Gastrocnemius medialis (tissue), 4 donors: ENCODE measurements at regions of chr2 and their contacts with region 1.

Region 1: DNA sequence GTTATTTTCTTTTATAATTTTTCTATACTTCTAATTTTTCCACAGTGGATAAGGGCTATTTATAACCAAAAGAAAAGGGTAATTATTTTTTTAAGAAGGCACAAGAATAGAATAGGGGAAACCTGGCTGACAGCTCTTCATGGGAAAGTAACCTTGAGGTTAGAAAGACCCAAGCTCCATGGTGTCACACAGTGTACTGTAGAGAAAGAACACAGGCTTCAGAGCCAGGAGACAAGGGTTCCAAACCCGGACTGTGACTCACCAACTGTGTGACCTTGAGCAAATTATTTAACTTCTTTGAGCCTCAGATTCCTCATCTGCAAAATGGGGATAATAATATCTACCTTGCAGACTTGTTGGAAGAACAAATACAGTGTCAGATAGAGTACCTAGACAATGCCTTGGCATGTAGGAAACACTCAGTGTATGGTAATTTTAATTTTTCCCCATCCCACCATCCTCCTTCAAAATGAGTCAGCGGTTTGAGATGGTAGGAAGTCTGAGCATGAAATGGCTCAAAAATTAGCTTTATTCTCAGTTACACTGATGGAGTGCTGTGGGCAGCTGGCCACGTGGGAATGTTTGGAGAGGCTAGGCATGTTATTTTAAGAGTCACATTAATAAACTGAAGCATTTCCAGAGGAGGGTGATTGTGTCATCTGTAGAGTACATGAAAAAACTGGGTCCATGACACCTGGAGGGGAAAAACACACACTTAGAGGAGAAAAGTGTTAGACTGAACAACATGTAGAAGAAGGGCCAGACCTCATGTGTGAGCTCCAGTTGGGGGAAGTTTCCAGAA is 36.7 kb downstream of the TMEM37 start:
- DNase-seq: no peak
- ATAC-seq: peak in 1 of 2 donors; percentile 60
- H3K4me3 ChIP-seq: no peak overlapping the region
- H3K27ac ChIP-seq: no peak overlapping the region
- H3K4me1 ChIP-seq: peaks cover 7 to 11% of the 10 kb centered on the region in 2 donors
- H3K27me3 ChIP-seq: no peaks in the 10 kb centered on the region
- CTCF ChIP-seq: no peak
- POLR2A ChIP-seq: no peak

Region 2: GRCh38 chr2:117888897-117889296 is 1579.5 kb before region 1 on chr2:
- in situ Hi-C with region 1: no loop called
- intact Hi-C with region 1: no loop called
- DNase-seq: no peak
- ATAC-seq: no peak
- H3K4me3 ChIP-seq: no peak overlapping the region
- H3K27ac ChIP-seq: no peak overlapping the region
- H3K4me1 ChIP-seq: no peaks in the 10 kb centered on the region
- H3K27me3 ChIP-seq: no peaks in the 10 kb centered on the region
- CTCF ChIP-seq: no peak
- POLR2A ChIP-seq: no peak

Region 3: DNA sequence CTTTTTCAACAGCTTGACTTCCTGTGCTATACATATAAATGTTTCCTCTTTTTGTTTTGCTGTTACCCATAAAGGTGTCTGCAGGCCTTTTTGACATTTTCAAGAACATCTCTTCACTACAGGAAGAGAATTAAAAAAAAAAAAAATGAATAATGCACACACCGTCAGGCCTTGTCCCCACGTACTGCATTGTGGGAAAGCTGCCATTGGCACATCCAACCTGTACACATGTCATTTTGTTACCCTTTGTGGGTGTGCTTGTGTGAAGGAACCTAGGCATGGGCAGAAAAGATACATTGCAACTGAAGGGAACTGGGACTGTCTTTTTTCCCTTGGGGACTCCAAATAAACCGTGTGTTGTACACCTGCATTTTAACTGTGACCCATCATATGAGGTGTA is 53.5 kb before region 1 on chr2:
- in situ Hi-C with region 1: loop called in 2 of 4 experiments (anchors 5 kb)
- intact Hi-C with region 1: no loop called
- DNase-seq: no peak
- ATAC-seq: no peak
- H3K4me3 ChIP-seq: no peak overlapping the region
- H3K27ac ChIP-seq: no peak overlapping the region
- H3K4me1 ChIP-seq: no peaks in the 10 kb centered on the region
- H3K27me3 ChIP-seq: no peaks in the 10 kb centered on the region
- CTCF ChIP-seq: no peak
- POLR2A ChIP-seq: no peak

Region 4: DNA sequence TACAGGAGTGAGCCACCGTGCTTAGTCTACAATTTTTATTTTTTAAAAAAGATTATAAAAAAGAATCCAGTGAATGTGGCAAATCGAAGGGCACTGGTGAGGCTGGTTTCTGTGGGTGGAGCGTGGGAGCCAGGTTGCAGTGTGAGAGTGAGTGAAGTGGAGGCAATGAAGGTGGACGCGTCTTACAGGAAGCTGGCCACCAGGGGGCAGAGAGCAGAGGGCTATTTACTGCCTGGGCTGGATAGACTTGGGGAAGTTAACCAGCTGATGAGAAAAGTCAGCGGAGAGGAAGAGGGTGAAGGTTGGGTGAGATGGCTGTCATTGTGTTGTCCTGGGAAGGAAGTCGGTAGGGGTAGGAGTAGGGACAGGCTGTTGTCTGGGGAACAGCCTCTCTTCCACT is 49.1 kb after region 1 on chr2:
- in situ Hi-C with region 1: no loop called
- intact Hi-C with region 1: no loop called
- DNase-seq: peak in 1 of 2 donors; percentile 23
- ATAC-seq: no peak
- H3K4me3 ChIP-seq: no peak overlapping the region
- H3K27ac ChIP-seq: no peak overlapping the region
- H3K4me1 ChIP-seq: peaks cover 0 to 11% of the 10 kb centered on the region in 2 donors
- H3K27me3 ChIP-seq: peaks cover 0 to 6% (median 3%) of the 10 kb centered on the region in 3 donors
- CTCF ChIP-seq: peak in 2 of 5 experiments; percentile 24 to 41
- POLR2A ChIP-seq: no peak

Region 5: DNA sequence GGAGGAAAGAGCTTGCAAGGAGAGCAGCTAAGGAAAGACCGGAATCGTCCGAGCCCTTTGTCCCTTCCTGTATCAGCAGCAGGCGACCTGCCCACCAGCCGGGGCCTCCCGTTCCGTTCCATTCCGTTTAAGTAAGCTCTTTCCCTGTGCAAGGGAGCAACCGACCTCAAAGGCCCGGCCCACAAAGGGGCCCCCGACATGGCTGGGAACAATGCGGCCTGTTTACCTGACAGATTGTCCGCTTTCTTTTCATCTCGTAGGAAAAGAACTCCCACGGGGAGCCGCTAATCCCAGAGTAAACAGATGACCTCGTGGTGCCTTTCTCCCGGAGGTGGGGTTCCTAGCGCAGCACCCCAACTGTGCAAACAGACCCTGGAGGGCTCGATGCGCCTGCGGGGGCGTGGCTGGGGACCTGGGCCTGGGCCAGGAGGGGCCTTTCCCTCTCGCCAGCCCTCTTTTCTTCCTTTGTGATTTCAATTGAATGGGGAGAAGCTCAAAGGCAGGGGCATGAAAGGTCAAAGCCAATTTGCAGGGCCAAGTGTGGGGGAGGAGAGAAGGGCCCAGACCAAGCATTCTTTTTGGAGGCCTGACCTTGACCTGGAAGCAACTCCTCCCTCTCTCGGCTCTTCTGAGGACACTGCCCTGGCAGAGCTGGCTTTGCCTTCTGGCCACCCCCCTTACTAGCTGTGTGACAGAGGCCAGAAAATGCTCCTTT is 997.8 kb after region 1 on chr2:
- in situ Hi-C with region 1: no loop called
- intact Hi-C with region 1: no loop called
- DNase-seq: no peak
- ATAC-seq: no peak
- H3K4me3 ChIP-seq: no peak overlapping the region
- H3K27ac ChIP-seq: no peak overlapping the region
- H3K4me1 ChIP-seq: peaks cover 20 to 25% of the 10 kb centered on the region in 2 donors
- H3K27me3 ChIP-seq: no peaks in the 10 kb centered on the region
- CTCF ChIP-seq: no peak
- POLR2A ChIP-seq: no peak